ENCODE measurements at regions of chr20 and their contacts with region 1.

Region 1: DNA sequence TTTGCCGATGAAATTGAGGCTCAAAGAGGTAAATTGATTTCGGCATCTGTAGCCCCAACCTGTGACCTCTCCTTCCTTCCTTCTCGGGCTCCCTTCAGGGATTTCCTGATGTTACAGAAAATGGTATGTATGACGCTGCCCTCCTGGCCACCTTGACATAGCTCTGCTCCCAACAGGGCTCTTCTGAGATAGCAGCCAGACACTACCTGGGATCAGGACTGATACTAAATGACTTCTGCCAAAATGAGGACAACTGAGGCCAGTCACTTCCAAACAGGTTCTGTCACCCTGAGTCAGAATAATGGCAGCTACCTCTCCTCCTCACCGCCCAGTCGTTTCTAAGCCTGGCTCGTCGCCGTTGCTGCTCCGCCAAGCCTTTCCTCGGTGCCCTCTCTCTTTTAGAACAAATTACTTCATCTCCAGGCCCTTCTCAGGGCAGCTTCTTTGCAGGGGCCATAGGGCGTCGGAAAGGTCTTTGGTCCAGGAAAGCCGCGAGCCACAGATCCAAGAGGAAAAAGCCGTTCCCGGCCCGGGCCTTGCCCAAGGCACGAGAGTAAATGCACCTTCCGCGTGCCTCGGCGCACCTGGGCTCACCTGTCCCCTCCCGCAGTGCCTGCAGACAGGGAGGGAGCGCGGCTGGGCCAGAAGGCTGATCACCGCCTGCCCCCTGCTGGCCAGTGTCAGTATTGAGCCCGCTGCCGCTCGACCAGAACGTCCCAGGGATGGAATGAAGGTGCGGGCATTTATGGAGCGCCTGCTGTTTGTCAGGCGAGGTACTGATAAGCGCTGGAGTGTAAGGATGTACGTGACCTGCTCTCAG is 904 bp upstream of the LPIN3 start:
- DNase-seq: peak; percentile 91
- ATAC-seq: peak; percentile 89

Region 2: GRCh38 chr20:41136680-41137613 is 202.8 kb before region 1 on chr20 and contains the start of gene PLCG1:
- intact Hi-C with region 1: loop called (anchors 10 kb)
- DNase-seq: peak; percentile 94
- ATAC-seq: peak; percentile 91
- total RNA-seq, gene PLCG1: 45.0 TPM

Region 3: DNA sequence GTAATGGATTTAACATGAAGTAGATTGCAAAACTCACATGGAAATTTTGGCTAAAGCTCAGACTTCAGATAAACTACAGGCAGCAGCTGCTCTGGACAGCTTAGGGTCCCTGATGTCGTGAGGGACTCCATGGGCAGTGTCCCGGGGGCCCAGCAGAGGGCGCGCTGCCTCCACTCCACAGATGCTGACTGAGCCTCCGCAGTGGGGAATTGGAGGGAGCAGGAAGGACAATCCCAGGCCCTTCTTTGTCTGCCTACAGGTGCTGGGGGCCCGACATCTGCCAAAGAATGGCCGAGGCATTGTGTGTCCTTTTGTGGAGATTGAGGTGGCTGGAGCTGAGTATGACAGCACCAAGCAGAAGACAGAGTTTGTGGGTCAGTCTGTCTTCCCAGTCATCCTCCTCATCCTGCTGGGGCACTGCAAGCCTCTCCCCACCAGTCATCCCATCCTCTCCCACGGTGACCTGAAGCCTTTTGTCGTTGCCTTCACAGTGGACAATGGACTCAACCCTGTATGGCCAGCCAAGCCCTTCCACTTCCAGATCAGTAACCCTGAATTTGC is 166.5 kb before region 1 on chr20:
- intact Hi-C with region 1: loop called (anchors 1 kb)
- DNase-seq: peak; percentile 93
- ATAC-seq: peak; percentile 88

Region 4: DNA sequence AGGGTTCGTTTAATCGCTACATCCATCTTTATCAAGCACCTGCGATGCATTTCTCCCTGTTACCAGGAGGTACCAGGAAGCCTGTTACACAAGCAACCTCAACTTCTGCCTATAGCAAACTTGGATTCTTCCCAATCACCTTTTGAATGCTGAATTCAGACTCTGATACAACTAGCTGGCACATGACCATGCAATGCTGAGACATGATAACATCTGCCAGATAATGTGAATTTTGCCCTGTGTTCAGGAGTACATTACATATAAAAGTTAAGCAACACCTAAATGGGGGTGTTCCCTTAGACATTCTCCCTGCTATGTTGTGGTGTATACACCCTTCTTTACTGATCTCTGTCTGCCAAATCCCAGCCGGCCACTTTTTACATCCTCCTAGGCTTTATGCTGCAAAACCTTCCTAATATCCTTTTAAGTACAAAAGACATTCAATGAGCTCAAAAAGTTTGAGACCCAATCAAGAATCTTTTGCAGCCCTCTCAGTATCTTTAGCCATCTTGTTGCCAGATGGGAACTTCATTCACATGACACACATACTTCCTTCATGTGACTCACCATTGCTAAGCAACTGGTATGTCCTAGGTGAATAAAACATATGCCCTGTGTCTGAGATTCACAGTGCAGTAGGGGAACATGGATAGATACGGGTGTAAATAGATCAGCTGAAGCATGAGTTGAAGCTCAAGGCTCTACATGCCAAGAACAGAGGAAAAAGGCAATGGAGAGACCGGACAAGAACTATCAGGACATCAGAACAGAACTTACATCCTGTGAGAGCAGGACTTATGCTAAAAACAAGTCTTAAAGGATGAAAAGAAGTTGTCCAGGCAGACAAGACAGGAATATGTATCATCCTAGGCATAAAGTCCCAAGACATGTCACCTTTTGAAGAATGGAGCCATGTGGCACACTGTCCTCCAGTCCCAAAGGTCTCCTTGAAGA is 106.5 kb before region 1 on chr20:
- intact Hi-C with region 1: loop called (anchors 5 kb)
- DNase-seq: no peak
- ATAC-seq: peak; percentile 36

Region 5: DNA sequence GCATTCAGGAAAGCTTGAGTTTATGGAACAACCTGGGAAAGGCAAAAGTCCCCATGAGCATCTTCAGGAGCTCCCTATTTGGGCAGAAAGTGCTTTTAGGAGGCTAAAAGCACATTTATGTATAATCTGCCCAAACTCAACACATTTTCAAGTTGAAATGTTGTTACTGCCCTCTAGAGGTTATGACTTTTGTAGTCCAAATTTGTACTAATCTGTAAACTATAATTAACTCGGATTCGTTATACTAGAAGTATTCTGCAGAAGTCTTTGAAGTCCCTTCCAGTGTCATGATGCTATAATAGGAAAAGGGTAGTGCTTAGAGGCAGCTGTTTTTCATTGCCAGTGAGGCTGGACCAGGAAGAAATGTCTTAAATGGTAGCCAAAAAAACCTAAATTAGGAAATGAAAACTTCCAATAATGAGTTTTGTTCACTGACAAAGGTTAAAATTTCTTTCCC is 71.7 kb after region 1 on chr20:
- intact Hi-C with region 1: loop called (anchors 5 kb)
- DNase-seq: no peak
- ATAC-seq: peak; percentile 75